ENCODE measurements at regions of chr7 and their contacts with region 1.

Region 1: GRCh38 chr7:786472-787255 is 45.6 kb upstream of the SUN1 start:
- DNase-seq: peak; percentile 38 to 93
- H3K4me3 ChIP-seq: no peak overlapping the region
- H3K27ac ChIP-seq: no peak overlapping the region
- H3K4me1 ChIP-seq: no peaks in the 10 kb centered on the region
- H3K27me3 ChIP-seq: no peaks in the 10 kb centered on the region
- CTCF ChIP-seq: peak in 2 of 3 experiments; percentile 83 to 91; a peak in 3 of 4 replicates
- EP300 ChIP-seq: no peak
- POLR2A ChIP-seq: no peak
- RAD21 ChIP-seq: peak; percentile 86 to 91

Region 2: GRCh38 chr7:774161-775109 is 12.2 kb before region 1 on chr7:
- CTCF ChIA-PET with region 1: interaction called, 35 read pairs
- POLR2A ChIA-PET with region 1: no interaction called
- DNase-seq: peak; percentile 27 to 96
- H3K4me3 ChIP-seq: no peak overlapping the region
- H3K27ac ChIP-seq: no peak overlapping the region
- H3K4me1 ChIP-seq: peaks cover 0 to 5% (median under 1%) of the 10 kb centered on the region in 4 experiments; a peak in 2 of 7 replicates
- H3K27me3 ChIP-seq: no peaks in the 10 kb centered on the region
- CTCF ChIP-seq: peak; percentile 89 to 99 (median 97)
- EP300 ChIP-seq: no peak
- POLR2A ChIP-seq: no peak
- RAD21 ChIP-seq: peak; percentile 92 to 95

Region 3: DNA sequence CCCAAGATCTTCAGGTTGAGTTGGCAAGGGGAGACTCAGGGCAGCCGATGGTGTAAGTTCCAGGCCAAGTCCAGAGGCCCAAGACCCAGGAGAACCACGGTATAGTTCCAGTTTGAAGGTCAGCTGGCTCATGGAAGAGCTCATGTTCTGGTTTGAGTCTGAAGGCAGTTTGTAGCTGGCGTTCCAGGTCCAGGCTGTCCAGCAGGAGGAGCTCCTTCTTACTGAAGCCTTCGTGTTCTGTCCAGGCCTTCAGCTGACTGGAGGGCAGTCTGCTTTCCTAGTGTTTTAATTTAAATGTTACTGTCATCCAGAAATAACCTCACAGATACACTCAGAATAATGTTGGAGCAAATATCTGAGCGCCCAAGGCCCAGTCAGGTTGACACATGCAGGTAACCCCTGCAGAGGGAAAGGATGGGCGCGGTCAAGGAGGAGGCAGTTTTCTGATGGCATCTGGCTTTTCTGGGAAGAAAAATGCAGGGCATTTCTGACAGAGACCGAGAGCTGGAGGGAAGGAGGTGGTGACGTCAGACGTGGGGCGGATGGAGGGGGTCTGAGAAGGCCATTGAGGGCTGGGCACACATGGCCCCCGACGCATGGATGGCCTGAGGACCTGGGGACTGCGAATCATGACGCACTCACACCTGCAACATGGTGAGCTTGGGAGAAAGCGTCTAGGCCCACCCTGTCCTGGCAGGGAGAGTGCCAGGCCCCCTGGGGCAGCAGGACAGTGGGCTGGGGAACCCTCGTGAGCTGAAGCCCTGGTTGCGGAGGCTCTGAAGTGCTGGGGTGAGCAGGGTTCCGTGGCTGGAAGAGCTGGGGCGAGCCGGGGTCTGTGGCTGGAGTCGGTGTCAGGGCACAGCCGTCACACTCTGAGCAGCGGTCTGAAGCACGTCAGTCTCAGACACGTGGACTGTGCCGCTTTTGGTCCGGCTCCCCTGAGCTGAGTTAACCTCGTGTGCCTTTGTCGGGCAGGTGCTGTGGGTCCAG is 50.0 kb after region 1 on chr7:
- CTCF ChIA-PET with region 1: interaction called, 11 read pairs
- POLR2A ChIA-PET with region 1: interaction called, 3 read pairs
- DNase-seq: no peak
- H3K4me3 ChIP-seq: no peak overlapping the region
- H3K27ac ChIP-seq: peak overlapping the region; percentile 12; the same call in 1 of the 2 replicates
- H3K4me1 ChIP-seq: peaks cover 0 to 10% (median 3%) of the 10 kb centered on the region in 4 experiments; a peak in 5 of 7 replicates
- H3K27me3 ChIP-seq: no peaks in the 10 kb centered on the region
- CTCF ChIP-seq: peak; percentile 51 to 64 (median 53)
- EP300 ChIP-seq: no peak
- POLR2A ChIP-seq: no peak
- RAD21 ChIP-seq: peak; percentile 7 to 30; a peak in 2 of 4 replicates